Activated B cell treated with CpG ODN at 0.5 μM for 24 hours (primary cell): ENCODE measurements at regions of chr13 and their contacts with region 1.

Region 1: DNA sequence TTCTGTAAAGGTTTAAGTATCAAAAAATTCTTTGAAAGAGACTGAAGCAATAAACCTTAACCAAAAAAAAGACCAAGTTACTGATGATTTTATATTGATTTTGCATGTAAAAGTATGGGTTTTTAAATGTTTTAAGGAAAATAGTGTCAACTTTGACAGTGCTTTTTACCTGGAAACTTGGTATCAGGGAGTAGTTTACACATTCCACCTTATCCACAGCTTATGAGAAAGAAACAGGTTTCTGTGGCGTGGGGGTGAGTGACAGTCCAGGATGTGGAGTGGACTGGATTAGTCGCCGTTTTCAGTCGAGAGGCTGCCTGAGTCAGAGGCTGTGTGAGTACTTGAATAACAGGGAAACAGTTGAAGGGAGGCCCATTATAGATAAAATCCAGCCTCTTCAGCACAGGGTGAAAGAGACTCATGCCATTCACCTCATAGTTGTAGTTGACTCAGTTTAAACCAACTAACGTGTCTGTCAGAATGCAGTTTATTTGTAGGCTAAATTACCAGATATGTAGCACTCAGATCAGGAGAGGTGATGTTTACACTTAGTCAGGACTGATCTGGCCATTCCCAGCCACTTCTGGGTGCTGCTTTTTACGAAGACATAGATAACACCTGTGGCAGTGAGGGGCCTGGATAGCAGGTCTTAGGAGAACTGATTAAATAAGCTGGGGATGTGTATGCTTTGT is 595 bp upstream of the GPR183 start:
- DNase-seq: no peak
- ATAC-seq: peak; percentile 57
- H3K4me3 Mint-ChIP-seq: peak overlapping the region; percentile 95
- H3K27ac Mint-ChIP-seq: peak overlapping the region; percentile 92
- H3K4me1 Mint-ChIP-seq: peaks cover 82% of the 10 kb centered on the region
- H3K27me3 Mint-ChIP-seq: no peaks in the 10 kb centered on the region
- CTCF ChIP-seq: no peak

Region 2: GRCh38 chr13:99041788-99042187 is 266.0 kb before region 1 on chr13:
- CTCF ChIA-PET with region 1: no interaction called
- POLR2A ChIA-PET with region 1: no interaction called
- intact Hi-C with region 1: no loop called
- DNase-seq: no peak
- ATAC-seq: no peak
- H3K4me3 Mint-ChIP-seq: no peak overlapping the region
- H3K27ac Mint-ChIP-seq: no peak overlapping the region
- H3K4me1 Mint-ChIP-seq: peaks cover 18% of the 10 kb centered on the region
- H3K27me3 Mint-ChIP-seq: peaks cover 45% of the 10 kb centered on the region
- CTCF ChIP-seq: no peak

Region 3: DNA sequence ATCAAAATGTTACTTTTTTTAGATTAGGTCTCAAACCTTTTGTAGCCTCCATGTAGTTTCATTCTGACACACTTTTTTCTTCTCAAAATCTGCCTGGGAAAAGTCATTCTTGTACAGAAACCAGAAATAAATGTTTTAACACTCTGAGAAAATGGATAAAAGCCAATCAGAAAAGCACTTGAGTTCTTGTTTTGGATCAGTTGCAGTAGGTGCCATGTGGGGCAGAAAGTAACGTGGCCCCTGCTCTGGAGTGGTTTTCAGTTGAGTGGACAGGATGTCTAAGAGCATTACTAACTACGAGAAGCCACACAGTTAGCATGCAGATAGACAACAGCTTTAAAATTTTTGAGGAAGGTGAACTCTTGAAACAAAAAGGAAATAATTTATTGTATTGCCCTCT is 19.7 kb before region 1 on chr13:
- CTCF ChIA-PET with region 1: interaction called, 9 read pairs
- POLR2A ChIA-PET with region 1: interaction called, 26 read pairs
- intact Hi-C with region 1: no loop called
- DNase-seq: no peak
- ATAC-seq: peak; percentile 85
- H3K4me3 Mint-ChIP-seq: peak overlapping the region; percentile 60
- H3K27ac Mint-ChIP-seq: peak overlapping the region; percentile 86
- H3K4me1 Mint-ChIP-seq: peaks cover 89% of the 10 kb centered on the region
- H3K27me3 Mint-ChIP-seq: no peaks in the 10 kb centered on the region
- CTCF ChIP-seq: no peak

Region 4: GRCh38 chr13:99296398-99296797 is 11.4 kb before region 1 on chr13:
- CTCF ChIA-PET with region 1: no interaction called
- POLR2A ChIA-PET with region 1: interaction called, 12 read pairs
- intact Hi-C with region 1: loop called (anchors 1 kb)
- DNase-seq: no peak
- ATAC-seq: peak; percentile 45
- H3K4me3 Mint-ChIP-seq: peak overlapping the region; percentile 74
- H3K27ac Mint-ChIP-seq: peak overlapping the region; percentile 92
- H3K4me1 Mint-ChIP-seq: peaks cover 87% of the 10 kb centered on the region
- H3K27me3 Mint-ChIP-seq: no peaks in the 10 kb centered on the region
- CTCF ChIP-seq: no peak

Region 5: DNA sequence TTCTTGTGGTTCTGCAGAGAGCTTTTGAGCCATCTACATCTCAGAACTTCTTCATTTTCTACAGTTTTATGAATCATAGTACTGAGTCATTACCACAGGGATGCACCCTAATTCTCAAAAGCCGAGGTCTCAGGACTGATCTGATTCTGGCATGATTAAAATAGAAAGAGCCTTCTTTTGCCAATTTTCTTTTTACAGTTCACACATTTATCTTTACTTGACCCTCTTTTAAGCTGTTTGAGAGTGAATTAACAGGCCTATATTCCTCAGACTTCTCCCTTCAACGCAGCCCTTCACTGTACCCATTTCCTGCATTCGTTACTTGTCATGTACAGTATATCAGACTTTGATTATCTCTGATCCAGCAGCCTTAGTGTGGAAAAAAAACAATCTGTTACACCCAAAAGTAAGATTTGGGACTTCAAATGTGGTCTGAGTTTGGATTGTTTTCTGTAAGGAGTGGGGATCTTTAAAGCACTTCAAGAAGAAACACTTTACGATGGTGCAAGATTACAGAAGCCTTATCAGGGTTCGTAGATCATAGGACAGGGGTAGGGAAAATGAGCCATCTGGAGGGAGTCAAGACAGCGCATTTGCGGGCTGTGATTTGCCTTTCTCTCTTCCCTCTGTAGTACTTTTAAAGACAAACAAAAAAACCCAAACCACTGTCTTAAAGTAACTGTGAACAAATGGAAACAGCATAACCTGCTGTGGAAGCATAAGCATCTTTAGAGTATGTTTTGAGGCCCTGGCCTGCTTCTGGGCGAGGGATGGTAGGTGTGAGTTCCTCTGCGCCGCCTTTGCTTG is 14.7 kb after region 1 on chr13:
- CTCF ChIA-PET with region 1: no interaction called
- POLR2A ChIA-PET with region 1: interaction called, 12 read pairs
- intact Hi-C with region 1: loop called (anchors 1 kb)
- DNase-seq: no peak
- ATAC-seq: peak; percentile 87
- H3K4me3 Mint-ChIP-seq: peak overlapping the region; percentile 56
- H3K27ac Mint-ChIP-seq: peak overlapping the region; percentile 91
- H3K4me1 Mint-ChIP-seq: peaks cover 66% of the 10 kb centered on the region
- H3K27me3 Mint-ChIP-seq: no peaks in the 10 kb centered on the region
- CTCF ChIP-seq: no peak

Region 6: GRCh38 chr13:99347911-99348451 is 40.2 kb after region 1 on chr13:
- CTCF ChIA-PET with region 1: no interaction called
- POLR2A ChIA-PET with region 1: interaction called, 12 read pairs
- intact Hi-C with region 1: no loop called
- DNase-seq: no peak
- ATAC-seq: peak; percentile 68
- H3K4me3 Mint-ChIP-seq: peak overlapping the region; percentile 50
- H3K27ac Mint-ChIP-seq: peak overlapping the region; percentile 82
- H3K4me1 Mint-ChIP-seq: peaks cover 63% of the 10 kb centered on the region
- H3K27me3 Mint-ChIP-seq: no peaks in the 10 kb centered on the region
- CTCF ChIP-seq: no peak

Region 7: DNA sequence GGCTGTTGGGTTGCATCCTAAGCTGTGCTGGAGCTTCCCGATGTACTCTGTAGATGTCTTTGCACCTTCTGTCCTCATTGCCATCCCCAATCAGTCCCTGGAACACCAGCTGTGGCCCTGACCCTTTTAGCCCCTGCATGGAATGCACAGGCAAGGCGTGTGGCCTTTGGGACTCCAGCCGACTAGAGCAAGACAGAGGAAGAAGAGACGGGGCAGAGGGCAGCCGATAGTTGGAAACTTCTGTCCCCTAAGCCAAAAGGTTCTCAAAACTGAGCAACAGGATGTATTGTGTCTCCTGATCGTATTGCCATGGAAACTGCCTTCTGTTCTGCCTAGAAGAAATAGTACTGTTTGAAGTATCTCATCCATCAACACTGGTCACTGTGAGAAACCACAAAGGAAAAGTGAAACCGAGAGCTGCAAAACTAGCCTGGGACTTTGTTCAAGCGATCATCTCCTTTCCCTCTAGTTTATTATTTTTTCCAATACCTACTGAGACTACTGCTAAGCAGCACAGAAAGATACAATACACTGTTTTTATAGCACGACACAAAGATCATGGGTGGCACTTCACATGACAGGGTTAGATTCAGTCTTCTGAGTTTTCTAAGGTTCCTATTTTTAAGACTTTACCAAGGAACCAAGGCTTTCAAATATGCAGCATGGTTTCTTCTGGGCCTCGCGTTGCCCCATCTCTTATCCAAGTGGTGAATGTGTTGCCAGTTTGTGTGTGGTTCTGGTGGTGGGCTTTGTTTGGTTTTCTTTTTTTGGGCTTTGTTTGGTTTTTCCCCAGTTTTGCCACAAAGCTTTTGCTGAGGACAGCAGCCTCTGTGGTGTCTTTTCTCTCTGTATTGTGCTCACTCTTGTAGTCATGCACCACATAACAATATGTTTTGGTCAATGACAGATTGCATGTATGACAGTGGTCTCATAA is 48.6 kb after region 1 on chr13:
- CTCF ChIA-PET with region 1: interaction called, 3 read pairs
- POLR2A ChIA-PET with region 1: interaction called, 8 read pairs
- intact Hi-C with region 1: loop called (anchors 1 kb)
- DNase-seq: peak; percentile 40
- ATAC-seq: peak; percentile 49
- H3K4me3 Mint-ChIP-seq: peak overlapping the region; percentile 70
- H3K27ac Mint-ChIP-seq: peak overlapping the region; percentile 94
- H3K4me1 Mint-ChIP-seq: peaks cover 97% of the 10 kb centered on the region
- H3K27me3 Mint-ChIP-seq: no peaks in the 10 kb centered on the region
- CTCF ChIP-seq: no peak

Region 8: GRCh38 chr13:99386911-99387788 is 79.4 kb after region 1 on chr13:
- CTCF ChIA-PET with region 1: interaction called, 7 read pairs
- POLR2A ChIA-PET with region 1: interaction called, 8 read pairs
- intact Hi-C with region 1: loop called (anchors 1 kb)
- DNase-seq: peak; percentile 81
- ATAC-seq: peak; percentile 78
- H3K4me3 Mint-ChIP-seq: peak overlapping the region; percentile 12
- H3K27ac Mint-ChIP-seq: peak overlapping the region; percentile 84
- H3K4me1 Mint-ChIP-seq: peaks cover 43% of the 10 kb centered on the region
- H3K27me3 Mint-ChIP-seq: no peaks in the 10 kb centered on the region
- CTCF ChIP-seq: peak; percentile 94